ENCODE measurements at regions of chr6 and their contacts with region 1.

Region 1: DNA sequence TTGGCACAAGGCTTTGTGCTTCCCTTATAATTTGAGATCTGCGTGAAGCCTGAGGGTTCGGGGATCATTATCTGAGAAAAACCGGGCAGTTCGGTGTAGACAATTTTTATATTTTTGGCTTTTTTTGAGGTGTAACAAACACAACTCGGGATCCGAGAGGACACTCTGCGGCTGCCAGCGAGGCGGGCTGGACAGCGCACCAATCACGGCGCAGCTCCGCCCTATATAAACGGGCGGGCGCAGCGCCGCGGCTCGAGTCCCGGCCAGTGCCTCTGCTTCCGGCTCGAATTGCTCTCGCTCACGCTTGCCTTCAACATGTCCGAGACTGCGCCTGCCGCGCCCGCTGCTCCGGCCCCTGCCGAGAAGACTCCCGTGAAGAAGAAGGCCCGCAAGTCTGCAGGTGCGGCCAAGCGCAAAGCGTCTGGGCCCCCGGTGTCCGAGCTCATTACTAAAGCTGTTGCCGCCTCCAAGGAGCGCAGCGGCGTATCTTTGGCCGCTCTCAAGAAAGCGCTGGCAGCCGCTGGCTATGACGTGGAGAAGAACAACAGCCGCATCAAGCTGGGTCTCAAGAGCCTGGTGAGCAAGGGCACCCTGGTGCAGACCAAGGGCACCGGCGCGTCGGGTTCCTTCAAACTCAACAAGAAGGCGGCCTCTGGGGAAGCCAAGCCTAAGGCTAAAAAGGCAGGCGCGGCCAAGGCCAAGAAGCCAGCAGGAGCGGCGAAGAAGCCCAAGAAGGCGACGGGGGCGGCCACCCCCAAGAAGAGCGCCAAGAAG is 69.0 kb downstream of the HFE start:
- DNase-seq: peak; percentile 88
- ATAC-seq: peak; percentile 77
- H3K4me3 ChIP-seq: peak overlapping the region; percentile 94 to 96 (median 95)
- H3K27ac ChIP-seq: peak overlapping the region; percentile 95
- H3K4me1 ChIP-seq: peaks cover 40% of the 10 kb centered on the region
- H3K27me3 ChIP-seq: no peaks in the 10 kb centered on the region; a peak in 1 of 5 replicates
- CTCF ChIP-seq: peak; percentile 37
- EP300 ChIP-seq: peak; percentile 7 to 60; a peak in 1 of 4 replicates
- POLR2A ChIP-seq: peak; percentile 99
- RAD21 ChIP-seq: peak; percentile 69

Region 2: GRCh38 chr6:25958700-25959162 is 197.5 kb before region 1 on chr6:
- CTCF ChIA-PET with region 1: no interaction called
- POLR2A ChIA-PET with region 1: no interaction called
- in situ Hi-C with region 1: no loop called
- intact Hi-C with region 1: no loop called
- DNase-seq: no peak
- ATAC-seq: no peak
- H3K4me3 ChIP-seq: no peak overlapping the region; a peak in 2 of 6 replicates
- H3K27ac ChIP-seq: no peak overlapping the region
- H3K4me1 ChIP-seq: peaks cover 36% of the 10 kb centered on the region
- H3K27me3 ChIP-seq: no peaks in the 10 kb centered on the region; a peak in 1 of 5 replicates
- CTCF ChIP-seq: no peak
- EP300 ChIP-seq: no peak
- POLR2A ChIP-seq: no peak
- RAD21 ChIP-seq: no peak

Region 3: DNA sequence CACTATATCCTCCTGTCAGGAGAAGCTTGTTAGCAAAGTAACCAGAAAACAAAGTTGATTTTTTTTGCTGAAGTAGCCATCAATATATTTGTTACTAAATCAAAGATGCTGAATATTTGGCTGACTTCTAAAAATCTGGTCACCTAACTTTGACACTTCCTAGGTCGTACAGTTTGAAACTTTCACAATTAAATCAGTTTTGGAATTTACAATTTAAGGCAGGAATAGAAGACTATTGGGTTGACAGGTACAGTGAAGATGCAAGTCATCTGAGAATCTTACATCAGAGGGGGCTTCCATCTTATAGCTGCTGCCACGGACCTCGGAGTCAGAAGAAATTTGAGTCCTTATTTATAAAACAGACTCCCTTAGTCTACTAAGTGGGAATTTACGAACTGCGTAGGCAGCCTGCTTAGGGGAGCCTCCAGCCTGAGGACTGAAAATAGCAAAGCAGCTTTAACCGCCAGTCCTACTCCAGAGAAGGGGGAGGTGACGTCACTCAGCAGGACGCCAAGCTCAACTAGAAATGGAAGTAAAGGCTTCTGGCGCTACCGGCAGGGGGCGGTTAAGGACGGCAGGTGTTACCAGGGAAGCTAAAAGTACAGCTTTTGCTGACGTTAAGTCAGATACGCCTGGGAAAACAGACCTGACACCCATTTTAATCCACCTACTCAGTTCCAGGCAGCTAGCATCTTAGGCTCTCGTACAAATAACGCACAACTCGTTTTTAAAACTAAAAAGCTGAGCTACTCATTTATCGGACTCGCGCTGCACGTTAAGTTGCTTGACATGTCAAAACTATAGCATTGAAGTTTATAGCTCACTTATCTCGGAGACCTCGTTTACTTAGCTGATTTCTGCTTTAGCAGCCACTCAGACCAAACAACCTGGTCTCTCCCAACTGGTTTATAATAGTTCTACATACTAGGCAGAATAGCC is 130.1 kb before region 1 on chr6:
- CTCF ChIA-PET with region 1: no interaction called
- POLR2A ChIA-PET with region 1: interaction called, 69 read pairs
- in situ Hi-C with region 1: no loop called
- intact Hi-C with region 1: loop called (anchors 2 kb)
- DNase-seq: peak; percentile 97
- ATAC-seq: peak; percentile 68
- H3K4me3 ChIP-seq: peak overlapping the region; percentile 59 to 80 (median 71)
- H3K27ac ChIP-seq: peak overlapping the region; percentile 93
- H3K4me1 ChIP-seq: peaks cover 62% of the 10 kb centered on the region
- H3K27me3 ChIP-seq: no peaks in the 10 kb centered on the region; a peak in 1 of 5 replicates
- CTCF ChIP-seq: peak; percentile 95
- EP300 ChIP-seq: peak in 1 of 2 experiments; percentile 54; a peak in 2 of 4 replicates
- POLR2A ChIP-seq: peak in 1 of 2 experiments; percentile 28; a peak in 1 of 4 replicates
- RAD21 ChIP-seq: peak; percentile 77

Region 4: DNA sequence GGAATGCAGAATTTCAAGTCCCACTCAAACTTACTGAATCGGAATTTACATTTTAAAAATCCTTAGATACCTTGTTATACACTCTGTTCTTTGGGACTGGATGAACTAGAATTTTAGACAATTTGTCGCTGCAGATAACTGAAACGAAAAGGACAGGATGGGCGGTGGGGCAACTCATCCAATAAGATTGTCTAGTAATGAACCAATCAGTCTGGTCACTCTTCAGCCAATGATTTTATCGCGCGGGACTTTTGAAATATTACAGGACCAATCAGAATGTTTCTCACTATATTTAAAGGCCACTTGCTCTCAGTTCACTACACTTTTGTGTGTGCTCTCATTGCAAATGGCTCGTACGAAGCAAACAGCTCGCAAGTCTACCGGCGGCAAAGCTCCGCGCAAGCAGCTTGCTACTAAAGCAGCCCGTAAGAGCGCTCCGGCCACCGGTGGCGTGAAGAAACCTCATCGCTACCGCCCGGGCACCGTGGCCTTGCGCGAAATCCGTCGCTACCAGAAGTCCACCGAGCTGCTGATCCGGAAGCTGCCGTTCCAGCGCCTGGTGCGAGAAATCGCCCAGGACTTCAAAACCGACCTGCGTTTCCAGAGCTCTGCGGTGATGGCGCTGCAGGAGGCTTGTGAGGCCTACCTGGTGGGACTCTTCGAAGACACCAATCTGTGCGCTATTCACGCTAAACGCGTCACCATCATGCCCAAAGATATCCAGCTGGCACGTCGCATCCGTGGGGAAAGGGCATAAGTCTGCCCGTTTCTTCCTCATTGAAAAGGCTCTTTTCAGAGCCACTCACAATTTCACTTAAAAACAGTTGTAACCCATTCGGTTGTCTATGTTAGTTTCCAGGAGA is 111.0 kb before region 1 on chr6:
- CTCF ChIA-PET with region 1: no interaction called
- POLR2A ChIA-PET with region 1: interaction called, 102 read pairs
- in situ Hi-C with region 1: no loop called
- intact Hi-C with region 1: no loop called
- DNase-seq: peak; percentile 99
- ATAC-seq: peak; percentile 74
- H3K4me3 ChIP-seq: peak overlapping the region; percentile 58 to 73 (median 63)
- H3K27ac ChIP-seq: peak overlapping the region; percentile 94
- H3K4me1 ChIP-seq: peaks cover 31% of the 10 kb centered on the region
- H3K27me3 ChIP-seq: no peaks in the 10 kb centered on the region; a peak in 1 of 5 replicates
- CTCF ChIP-seq: peak; percentile 62
- EP300 ChIP-seq: peak in 1 of 2 experiments; percentile 44; a peak in 2 of 4 replicates
- POLR2A ChIP-seq: peak; percentile 98 to 100
- RAD21 ChIP-seq: peak; percentile 69

Region 5: DNA sequence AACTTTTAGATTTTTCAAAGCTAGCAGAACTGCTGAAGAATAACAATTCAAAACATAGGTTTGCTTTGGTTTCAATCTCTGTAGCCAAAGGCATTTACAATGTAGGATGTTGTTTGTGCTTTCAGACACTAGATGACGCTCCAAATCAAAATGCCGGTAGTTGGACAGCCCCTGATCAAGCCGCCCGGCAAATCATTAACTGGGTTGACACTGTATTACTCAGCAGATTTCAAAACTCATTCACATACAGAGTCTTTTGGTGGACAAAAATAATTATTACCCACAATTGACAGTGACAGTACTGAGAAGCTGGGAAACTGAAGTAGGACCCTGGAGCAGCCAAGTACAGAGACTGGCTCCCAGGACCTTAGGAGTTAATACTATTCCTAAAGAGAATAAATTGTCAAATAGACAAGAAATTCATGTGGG is 90.3 kb before region 1 on chr6:
- CTCF ChIA-PET with region 1: no interaction called
- POLR2A ChIA-PET with region 1: interaction called, 6 read pairs
- in situ Hi-C with region 1: no loop called
- intact Hi-C with region 1: loop called (anchors 1 kb)
- DNase-seq: peak; percentile 96
- ATAC-seq: peak; percentile 94
- H3K4me3 ChIP-seq: peak overlapping the region; percentile 12 to 40 (median 16); a peak in 3 of 6 replicates
- H3K27ac ChIP-seq: peak overlapping the region; percentile 71
- H3K4me1 ChIP-seq: peaks cover 22% of the 10 kb centered on the region
- H3K27me3 ChIP-seq: no peaks in the 10 kb centered on the region
- CTCF ChIP-seq: peak; percentile 92
- EP300 ChIP-seq: peak in 1 of 2 experiments; percentile 59; a peak in 1 of 4 replicates
- POLR2A ChIP-seq: no peak
- RAD21 ChIP-seq: peak; percentile 95

Region 6: DNA sequence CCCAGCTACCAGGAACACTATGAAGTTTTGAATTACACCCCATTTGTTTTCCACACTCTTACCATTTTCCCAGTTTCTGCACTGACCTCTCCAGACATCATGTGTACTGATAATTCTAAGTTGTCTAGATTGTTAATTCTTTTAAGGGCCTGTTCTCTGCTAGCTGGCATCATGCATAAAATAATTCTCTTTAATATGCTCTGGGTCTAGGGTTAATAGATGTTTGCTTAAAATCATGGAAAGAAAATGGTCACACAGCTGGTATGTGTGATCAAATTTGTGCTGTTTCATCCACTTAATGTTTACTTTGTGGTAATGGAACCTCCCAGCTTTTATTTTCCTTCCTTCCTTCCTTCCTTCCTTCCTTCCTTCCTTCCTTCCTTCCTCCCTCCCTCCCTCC is 19.9 kb before region 1 on chr6:
- CTCF ChIA-PET with region 1: no interaction called
- POLR2A ChIA-PET with region 1: interaction called, 41 read pairs
- in situ Hi-C with region 1: no loop called
- intact Hi-C with region 1: no loop called
- DNase-seq: no peak
- ATAC-seq: no peak
- H3K4me3 ChIP-seq: no peak overlapping the region
- H3K27ac ChIP-seq: no peak overlapping the region
- H3K4me1 ChIP-seq: peaks cover 6% of the 10 kb centered on the region
- H3K27me3 ChIP-seq: no peaks in the 10 kb centered on the region
- CTCF ChIP-seq: no peak
- EP300 ChIP-seq: no peak
- POLR2A ChIP-seq: no peak
- RAD21 ChIP-seq: no peak

Region 7: GRCh38 chr6:26175428-26176181 is 19.3 kb after region 1 on chr6:
- CTCF ChIA-PET with region 1: no interaction called
- POLR2A ChIA-PET with region 1: interaction called, 5 read pairs
- in situ Hi-C with region 1: no loop called
- intact Hi-C with region 1: loop called (anchors 2 kb)
- DNase-seq: peak; percentile 72
- ATAC-seq: peak; percentile 55
- H3K4me3 ChIP-seq: no peak overlapping the region
- H3K27ac ChIP-seq: no peak overlapping the region
- H3K4me1 ChIP-seq: peaks cover 12% of the 10 kb centered on the region
- H3K27me3 ChIP-seq: no peaks in the 10 kb centered on the region
- CTCF ChIP-seq: peak; percentile 79
- EP300 ChIP-seq: no peak
- POLR2A ChIP-seq: no peak
- RAD21 ChIP-seq: peak; percentile 76

Region 8: GRCh38 chr6:26196846-26197648 is 40.8 kb after region 1 on chr6:
- CTCF ChIA-PET with region 1: no interaction called
- POLR2A ChIA-PET with region 1: interaction called, 318 read pairs
- in situ Hi-C with region 1: no loop called
- intact Hi-C with region 1: loop called (anchors 1 kb)
- DNase-seq: peak; percentile 93
- ATAC-seq: peak; percentile 66
- H3K4me3 ChIP-seq: peak overlapping the region; percentile 81 to 90 (median 87)
- H3K27ac ChIP-seq: peak overlapping the region; percentile 94
- H3K4me1 ChIP-seq: peaks cover 30% of the 10 kb centered on the region
- H3K27me3 ChIP-seq: no peaks in the 10 kb centered on the region; a peak in 1 of 5 replicates
- CTCF ChIP-seq: peak; percentile 60
- EP300 ChIP-seq: peak; percentile 34 to 41; a peak in 2 of 4 replicates
- POLR2A ChIP-seq: peak; percentile 99
- RAD21 ChIP-seq: peak; percentile 53

Region 9: DNA sequence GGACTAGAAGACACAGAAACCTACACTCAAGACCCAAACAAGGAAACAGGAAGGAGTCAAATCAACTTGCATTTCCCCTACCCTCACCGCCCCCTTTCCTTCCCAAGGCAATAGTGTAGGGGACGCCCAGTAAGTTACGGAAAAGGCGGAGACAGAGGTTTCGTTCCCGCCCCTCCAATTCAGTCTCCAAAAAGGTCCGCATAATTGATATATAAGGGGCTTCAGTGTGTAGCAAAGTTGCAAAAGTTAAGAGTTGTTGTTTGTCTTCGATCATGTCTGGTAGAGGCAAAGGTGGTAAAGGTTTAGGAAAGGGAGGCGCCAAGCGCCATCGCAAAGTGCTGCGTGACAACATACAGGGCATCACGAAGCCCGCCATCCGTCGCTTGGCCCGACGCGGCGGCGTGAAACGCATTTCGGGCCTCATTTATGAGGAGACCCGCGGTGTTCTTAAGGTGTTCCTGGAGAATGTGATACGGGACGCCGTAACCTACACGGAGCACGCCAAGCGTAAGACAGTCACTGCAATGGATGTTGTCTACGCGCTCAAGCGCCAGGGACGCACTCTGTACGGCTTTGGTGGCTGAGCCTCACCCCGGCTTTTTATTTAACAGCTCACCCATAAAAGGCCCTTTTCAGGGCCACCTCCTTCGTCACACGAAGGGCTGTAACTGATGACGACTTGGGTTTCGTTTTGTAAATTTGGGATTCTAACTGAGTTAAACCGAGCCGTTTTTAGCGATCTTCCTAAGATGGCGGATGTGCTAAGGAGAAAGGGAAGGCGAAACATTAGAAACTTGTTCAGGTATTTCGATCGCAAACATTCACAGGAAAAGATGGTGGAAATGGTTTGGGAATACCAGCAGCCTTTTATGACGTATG is 84.1 kb after region 1 on chr6:
- CTCF ChIA-PET with region 1: no interaction called
- POLR2A ChIA-PET with region 1: no interaction called
- in situ Hi-C with region 1: no loop called
- intact Hi-C with region 1: no loop called
- DNase-seq: no peak
- ATAC-seq: no peak
- H3K4me3 ChIP-seq: no peak overlapping the region
- H3K27ac ChIP-seq: no peak overlapping the region
- H3K4me1 ChIP-seq: peaks cover 2% of the 10 kb centered on the region; the same call in 1 of the 2 replicates
- H3K27me3 ChIP-seq: peaks cover 0 to 3% of the 10 kb centered on the region in 2 experiments; a peak in 2 of 5 replicates
- CTCF ChIP-seq: no peak
- EP300 ChIP-seq: no peak
- POLR2A ChIP-seq: no peak
- RAD21 ChIP-seq: no peak

Measured in HepG2 (cell line).